Endothelial cell of umbilical vein (primary cell): ENCODE measurements at regions of chr7 and their contacts with region 1.

Region 1: DNA sequence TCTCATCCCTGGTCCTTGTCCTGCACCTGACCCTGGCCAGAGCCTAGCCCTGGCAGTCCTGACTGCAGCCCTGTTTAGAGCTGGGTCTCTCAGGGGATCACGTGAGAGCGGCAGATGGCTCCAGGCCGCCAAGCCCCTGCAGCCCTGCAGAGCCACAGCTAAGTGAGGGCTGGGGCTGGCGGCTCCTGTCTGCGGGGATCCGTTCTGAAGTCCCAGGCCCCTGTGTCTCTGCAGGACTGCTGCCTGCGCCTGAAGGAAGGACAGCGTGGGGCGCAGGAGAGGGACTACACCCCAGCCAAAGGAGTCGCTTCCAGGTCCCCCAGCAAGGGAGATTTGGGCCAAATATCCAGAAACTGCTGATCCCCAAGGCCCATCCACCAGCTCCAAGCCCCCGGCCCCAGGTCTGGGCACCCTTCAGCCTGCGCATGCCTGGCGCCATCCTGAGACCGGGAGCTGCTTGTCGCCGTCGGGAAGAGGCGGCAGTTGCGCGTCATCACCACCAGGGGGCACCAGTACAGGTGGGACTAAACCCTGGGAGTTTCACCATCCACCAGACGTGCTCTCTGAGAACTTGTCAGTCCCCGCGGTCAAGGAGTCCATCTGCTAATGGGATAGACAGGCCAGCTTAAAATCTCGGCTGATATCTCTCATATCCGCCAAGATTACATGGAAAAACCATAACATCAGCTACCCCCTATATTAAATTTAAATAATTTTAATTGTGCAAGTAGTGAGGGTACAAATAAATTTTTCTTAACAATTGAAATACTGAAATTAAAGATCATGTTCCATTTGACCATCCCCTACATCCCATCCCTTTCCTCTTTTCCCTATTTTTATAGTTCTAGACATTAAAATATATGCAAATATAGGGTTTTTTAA is 25.1 kb upstream of the GHRHR start:
- DNase-seq: peak; percentile 78
- H3K4me3 ChIP-seq: no peak overlapping the region
- H3K27ac ChIP-seq: no peak overlapping the region
- H3K4me1 ChIP-seq: no peaks in the 10 kb centered on the region
- H3K27me3 ChIP-seq: peaks cover 14 to 45% of the 10 kb centered on the region in 2 experiments
- CTCF ChIP-seq: peak; percentile 94 to 96
- POLR2A ChIP-seq: no peak

Region 2: DNA sequence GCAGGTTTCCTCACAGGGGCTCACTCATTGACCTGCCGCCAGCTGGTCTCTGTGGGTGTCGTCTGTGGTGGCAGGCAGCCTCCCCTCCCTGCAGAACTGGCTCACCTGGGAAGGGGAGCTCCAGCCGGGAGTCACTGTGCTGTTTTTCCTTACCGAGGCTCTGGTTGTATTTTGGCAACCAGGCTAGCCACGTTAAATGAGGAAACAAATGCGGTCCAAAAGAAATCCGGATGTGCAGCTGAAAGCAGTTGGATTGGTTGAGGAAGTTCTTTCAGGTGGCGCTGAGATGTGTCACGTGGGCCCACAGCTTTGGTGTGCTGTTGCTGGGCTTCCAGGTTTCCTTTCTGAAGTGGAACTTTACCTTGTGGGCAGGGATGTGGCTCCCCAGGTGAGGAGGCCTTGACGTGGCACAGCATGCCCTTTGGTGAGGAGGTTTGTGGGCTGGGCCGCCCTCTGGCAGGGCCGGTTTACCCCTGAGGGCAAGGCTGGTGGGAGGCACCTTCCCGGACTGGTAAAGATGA is 789.7 kb before region 1 on chr7:
- CTCF ChIA-PET with region 1: no interaction called
- POLR2A ChIA-PET with region 1: no interaction called
- dilution Hi-C with region 1: no loop called
- intact Hi-C with region 1: no loop called
- DNase-seq: no peak
- H3K4me3 ChIP-seq: no peak overlapping the region
- H3K27ac ChIP-seq: no peak overlapping the region
- H3K4me1 ChIP-seq: no peaks in the 10 kb centered on the region
- H3K27me3 ChIP-seq: no peaks in the 10 kb centered on the region
- CTCF ChIP-seq: no peak
- POLR2A ChIP-seq: no peak

Region 3: DNA sequence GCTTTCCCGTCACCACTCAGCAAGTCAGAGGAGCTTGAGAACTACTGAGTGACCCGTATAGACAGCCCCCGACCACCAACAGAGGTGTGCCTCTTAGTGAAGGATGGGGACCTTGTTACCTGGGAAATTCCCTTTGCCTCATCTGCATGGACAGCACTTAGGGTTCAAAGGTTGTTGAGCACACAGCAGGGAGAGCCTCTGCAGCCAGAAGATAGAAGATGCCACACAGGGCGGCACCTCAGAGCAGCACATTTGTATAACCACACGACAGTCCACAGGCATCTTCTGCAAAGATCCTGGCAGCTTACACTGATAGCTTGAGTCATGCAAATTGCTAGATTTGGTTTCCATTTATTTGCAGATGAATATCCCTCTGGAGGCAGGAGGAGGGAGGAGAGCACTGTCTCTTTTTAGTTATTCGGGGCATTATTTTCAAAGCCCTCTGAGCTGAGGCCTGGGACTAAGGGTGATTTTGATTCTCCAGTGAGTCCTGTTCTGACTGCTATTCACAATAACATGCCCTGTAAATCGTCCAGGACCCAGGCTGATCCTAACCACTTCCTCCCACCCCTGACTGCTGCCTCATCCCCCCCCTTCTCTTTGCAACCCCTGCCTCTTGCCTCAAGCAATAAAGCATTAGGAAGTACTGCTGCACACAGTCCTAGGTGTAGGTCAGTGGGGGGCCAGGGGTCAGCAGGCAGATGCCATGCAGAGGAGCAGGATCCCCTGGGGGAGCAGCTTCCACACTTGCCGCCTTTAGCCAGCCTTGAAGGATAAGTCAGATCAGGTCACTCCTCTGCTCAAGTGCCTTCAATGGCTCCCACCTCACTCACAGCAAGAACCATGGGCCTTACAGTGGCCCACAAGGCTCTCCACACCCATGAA is 211.4 kb before region 1 on chr7:
- CTCF ChIA-PET with region 1: no interaction called
- POLR2A ChIA-PET with region 1: no interaction called
- dilution Hi-C with region 1: no loop called
- intact Hi-C with region 1: no loop called
- DNase-seq: no peak
- H3K4me3 ChIP-seq: no peak overlapping the region
- H3K27ac ChIP-seq: no peak overlapping the region
- H3K4me1 ChIP-seq: no peaks in the 10 kb centered on the region
- H3K27me3 ChIP-seq: peaks cover 11 to 15% of the 10 kb centered on the region in 2 experiments
- CTCF ChIP-seq: no peak
- POLR2A ChIP-seq: no peak

Region 4: DNA sequence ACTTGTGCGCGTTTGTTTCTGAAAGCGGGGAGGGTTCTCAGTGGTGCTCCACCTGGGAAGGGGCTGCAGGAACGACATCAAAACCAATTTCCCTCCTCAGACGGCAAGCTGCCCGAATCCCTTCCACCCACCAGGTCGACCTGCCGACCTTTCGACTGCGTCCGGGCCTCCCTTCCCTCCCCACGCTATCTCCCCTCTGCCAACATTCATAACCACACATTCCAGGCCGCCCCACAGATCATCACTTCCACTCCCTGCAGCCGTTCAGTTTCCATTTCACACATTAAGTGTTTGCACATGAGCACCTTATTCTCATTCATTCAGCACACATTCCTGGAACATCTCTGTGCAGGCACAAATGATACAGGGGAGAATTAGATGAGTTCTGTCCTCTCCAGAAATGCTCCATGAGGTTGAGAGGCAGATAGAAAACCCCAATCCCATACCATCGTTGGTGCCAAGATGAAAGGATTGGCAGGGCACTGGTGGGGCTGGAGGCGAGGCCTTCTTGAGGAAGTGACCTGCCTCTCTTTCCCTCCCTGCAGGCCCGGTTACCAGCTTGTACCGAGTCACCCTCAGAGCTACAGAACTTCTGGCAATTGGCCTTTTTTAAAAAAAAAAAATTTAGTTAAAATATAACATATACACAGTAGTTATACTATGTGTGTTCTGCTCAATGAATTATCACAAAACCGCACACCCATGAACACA is 97.5 kb before region 1 on chr7:
- CTCF ChIA-PET with region 1: interaction called, 10 read pairs
- POLR2A ChIA-PET with region 1: no interaction called
- dilution Hi-C with region 1: no loop called
- intact Hi-C with region 1: no loop called
- DNase-seq: no peak
- H3K4me3 ChIP-seq: no peak overlapping the region
- H3K27ac ChIP-seq: no peak overlapping the region
- H3K4me1 ChIP-seq: peaks cover 13% of the 10 kb centered on the region
- H3K27me3 ChIP-seq: no peaks in the 10 kb centered on the region
- CTCF ChIP-seq: no peak
- POLR2A ChIP-seq: no peak

Region 5: DNA sequence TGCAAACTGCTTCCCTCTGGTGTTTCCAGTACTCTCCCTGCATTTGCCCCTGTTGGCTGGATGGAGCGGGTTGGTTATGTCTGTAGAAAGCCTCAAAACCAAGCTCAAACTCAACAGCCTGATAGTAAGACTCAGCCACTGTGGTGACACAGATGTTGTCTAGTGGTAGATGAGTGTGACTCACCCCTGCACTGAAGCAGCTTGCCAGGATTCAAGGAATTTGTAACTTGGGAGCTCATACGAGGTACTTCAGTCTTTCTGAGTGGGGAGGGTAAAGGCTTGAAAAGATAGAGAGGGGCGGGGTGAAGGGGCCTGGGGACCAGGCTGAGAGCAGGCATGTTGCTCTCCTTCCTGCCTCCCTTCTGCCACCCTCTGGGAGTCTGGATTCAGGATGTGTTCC is 49.9 kb before region 1 on chr7:
- CTCF ChIA-PET with region 1: interaction called, 10 read pairs
- POLR2A ChIA-PET with region 1: no interaction called
- dilution Hi-C with region 1: no loop called
- intact Hi-C with region 1: no loop called
- DNase-seq: peak; percentile 73
- H3K4me3 ChIP-seq: no peak overlapping the region
- H3K27ac ChIP-seq: no peak overlapping the region
- H3K4me1 ChIP-seq: peaks cover 10% of the 10 kb centered on the region
- H3K27me3 ChIP-seq: peaks cover 28% of the 10 kb centered on the region in 2 experiments
- CTCF ChIP-seq: no peak
- POLR2A ChIP-seq: no peak

Region 6: GRCh38 chr7:30920584-30921539 is 17.8 kb before region 1 on chr7:
- CTCF ChIA-PET with region 1: interaction called, 12 read pairs
- POLR2A ChIA-PET with region 1: no interaction called
- dilution Hi-C with region 1: no loop called
- intact Hi-C with region 1: no loop called
- DNase-seq: peak; percentile 81
- H3K4me3 ChIP-seq: no peak overlapping the region
- H3K27ac ChIP-seq: peak overlapping the region; percentile 58
- H3K4me1 ChIP-seq: peaks cover 24% of the 10 kb centered on the region
- H3K27me3 ChIP-seq: no peaks in the 10 kb centered on the region
- CTCF ChIP-seq: no peak
- POLR2A ChIP-seq: no peak

Region 7: GRCh38 chr7:30963805-30964204 is 25.1 kb after region 1 on chr7 and contains the start of gene GHRHR:
- CTCF ChIA-PET with region 1: interaction called, 18 read pairs
- POLR2A ChIA-PET with region 1: no interaction called
- dilution Hi-C with region 1: no loop called
- intact Hi-C with region 1: no loop called
- DNase-seq: no peak
- H3K4me3 ChIP-seq: no peak within 1 kb of the TSS
- H3K27ac ChIP-seq: no peak within 1 kb of the TSS
- H3K4me1 ChIP-seq: no peaks in the 10 kb centered on the region
- H3K27me3 ChIP-seq: peaks cover 5 to 9% of the 10 kb centered on the region in 2 experiments
- CTCF ChIP-seq: no peak
- POLR2A ChIP-seq: no peak
- total RNA-seq, gene GHRHR: not detected in 2 replicates

Region 8: DNA sequence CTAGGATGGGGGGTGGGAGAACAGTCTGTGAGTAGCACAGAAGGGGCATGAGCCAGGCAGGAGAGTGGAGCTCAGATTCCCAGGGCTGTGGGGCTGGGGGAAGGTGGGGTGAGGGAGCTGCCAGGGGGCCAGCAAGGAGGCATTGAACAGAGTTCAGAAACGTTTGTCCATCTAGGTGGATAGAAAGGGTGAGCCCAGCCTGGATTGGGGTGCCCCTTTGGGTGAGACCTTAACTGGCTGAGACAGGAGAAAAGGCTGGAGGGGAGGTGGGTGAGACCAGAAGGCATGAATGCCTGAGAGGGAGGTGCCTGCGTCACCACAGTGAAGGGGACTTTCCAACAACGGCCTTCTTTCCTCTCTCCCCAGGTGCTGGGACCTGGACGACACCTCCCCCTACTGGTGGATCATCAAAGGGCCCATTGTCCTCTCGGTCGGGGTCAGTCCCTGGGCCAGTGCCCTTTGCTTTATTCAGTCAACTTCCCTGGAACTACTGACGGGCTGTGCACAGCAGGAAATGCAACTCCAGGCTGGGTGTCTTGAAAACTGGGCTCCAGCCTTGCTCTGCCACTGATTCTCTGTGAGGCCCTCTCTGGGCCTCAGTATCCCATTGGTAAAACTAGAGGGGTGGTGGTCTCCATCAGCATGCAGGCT is 36.1 kb after region 1 on chr7:
- CTCF ChIA-PET with region 1: interaction called, 17 read pairs
- POLR2A ChIA-PET with region 1: no interaction called
- dilution Hi-C with region 1: no loop called
- intact Hi-C with region 1: loop called (anchors 2 kb)
- DNase-seq: peak; percentile 62
- H3K4me3 ChIP-seq: no peak overlapping the region
- H3K27ac ChIP-seq: no peak overlapping the region
- H3K4me1 ChIP-seq: no peaks in the 10 kb centered on the region
- H3K27me3 ChIP-seq: peaks cover 22 to 29% of the 10 kb centered on the region in 2 experiments
- CTCF ChIP-seq: peak; percentile 61 to 81
- POLR2A ChIP-seq: no peak

Region 9: GRCh38 chr7:31134246-31135188 is 195.8 kb after region 1 on chr7:
- CTCF ChIA-PET with region 1: interaction called, 16 read pairs
- POLR2A ChIA-PET with region 1: no interaction called
- dilution Hi-C with region 1: no loop called
- intact Hi-C with region 1: no loop called
- DNase-seq: peak; percentile 58
- H3K4me3 ChIP-seq: no peak overlapping the region
- H3K27ac ChIP-seq: no peak overlapping the region
- H3K4me1 ChIP-seq: no peaks in the 10 kb centered on the region
- H3K27me3 ChIP-seq: no peaks in the 10 kb centered on the region
- CTCF ChIP-seq: peak; percentile 64 to 72
- POLR2A ChIP-seq: no peak

Region 10: DNA sequence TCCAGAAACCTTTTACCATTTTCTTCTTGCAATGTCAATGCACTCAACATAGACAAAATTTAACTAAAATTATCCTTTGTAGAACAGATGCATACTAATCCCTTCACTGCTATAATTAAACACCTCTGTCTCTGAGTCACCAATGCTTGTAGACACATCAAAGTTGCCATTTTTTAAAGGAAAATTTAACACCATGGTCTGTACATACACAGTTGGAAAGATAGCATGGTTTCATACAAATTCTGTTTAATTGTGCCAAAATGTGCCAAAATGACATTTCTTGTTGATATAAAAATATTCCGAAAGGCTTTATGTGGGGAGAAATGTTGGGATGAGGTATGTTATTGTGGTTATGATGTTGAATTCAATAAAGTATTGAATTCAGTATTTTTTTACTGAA is 276.1 kb after region 1 on chr7:
- CTCF ChIA-PET with region 1: no interaction called
- POLR2A ChIA-PET with region 1: no interaction called
- dilution Hi-C with region 1: no loop called
- intact Hi-C with region 1: no loop called
- DNase-seq: no peak
- H3K4me3 ChIP-seq: no peak overlapping the region
- H3K27ac ChIP-seq: no peak overlapping the region
- H3K4me1 ChIP-seq: no peaks in the 10 kb centered on the region
- H3K27me3 ChIP-seq: no peaks in the 10 kb centered on the region
- CTCF ChIP-seq: no peak
- POLR2A ChIP-seq: no peak